IMR-90 (cell line): ENCODE measurements at regions of chr22 and their contacts with region 1.

Region 1: DNA sequence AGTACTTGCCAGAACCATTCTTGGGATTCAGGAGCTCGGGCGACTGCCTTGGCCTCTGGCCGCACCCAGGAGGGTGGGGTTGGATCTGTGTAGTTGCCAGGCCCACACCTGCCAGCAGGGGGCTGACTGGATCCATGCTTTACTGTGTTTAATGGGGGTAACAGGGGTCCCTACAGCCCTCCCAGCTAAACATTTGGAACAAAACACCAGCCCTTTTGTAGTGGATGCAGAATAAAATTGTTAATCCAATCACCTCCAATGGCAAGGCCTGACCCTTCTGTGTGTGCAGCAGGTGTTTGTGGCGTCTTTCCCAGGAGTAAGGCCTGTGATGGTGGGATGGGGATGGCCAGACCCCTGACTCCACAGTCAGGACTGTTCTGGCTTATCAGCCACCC is 22.5 kb downstream of the SUN2 start:
- DNase-seq: no peak
- ATAC-seq: peak; percentile 53
- H3K4me3 ChIP-seq: no peak overlapping the region
- H3K27ac ChIP-seq: no peak overlapping the region
- H3K4me1 ChIP-seq: peaks cover 5% of the 10 kb centered on the region
- H3K27me3 ChIP-seq: no peaks in the 10 kb centered on the region
- CTCF ChIP-seq: peak; percentile 54
- POLR2A ChIP-seq: no peak
- RAD21 ChIP-seq: peak; percentile 34; the same call in 1 of the 2 replicates

Region 2: GRCh38 chr22:38641476-38642040 is 91.8 kb before region 1 on chr22:
- CTCF ChIA-PET with region 1: no interaction called
- POLR2A ChIA-PET with region 1: interaction called, 11 read pairs
- dilution Hi-C with region 1: no loop called
- in situ Hi-C with region 1: no loop called
- intact Hi-C with region 1: no loop called
- DNase-seq: no peak
- ATAC-seq: no peak
- H3K4me3 ChIP-seq: no peak overlapping the region
- H3K27ac ChIP-seq: no peak overlapping the region
- H3K4me1 ChIP-seq: no peaks in the 10 kb centered on the region
- H3K27me3 ChIP-seq: no peaks in the 10 kb centered on the region
- CTCF ChIP-seq: no peak
- POLR2A ChIP-seq: no peak
- RAD21 ChIP-seq: no peak

Region 3: GRCh38 chr22:38907767-38908166 is 174.4 kb after region 1 on chr22:
- CTCF ChIA-PET with region 1: no interaction called
- POLR2A ChIA-PET with region 1: no interaction called
- dilution Hi-C with region 1: no loop called
- in situ Hi-C with region 1: no loop called
- intact Hi-C with region 1: no loop called
- DNase-seq: no peak
- ATAC-seq: no peak
- H3K4me3 ChIP-seq: no peak overlapping the region
- H3K27ac ChIP-seq: no peak overlapping the region
- H3K4me1 ChIP-seq: no peaks in the 10 kb centered on the region
- H3K27me3 ChIP-seq: peaks cover 19% of the 10 kb centered on the region
- CTCF ChIP-seq: no peak
- POLR2A ChIP-seq: no peak
- RAD21 ChIP-seq: no peak